ENCODE measurements at regions of chr6 and their contacts with region 1.

Region 1: DNA sequence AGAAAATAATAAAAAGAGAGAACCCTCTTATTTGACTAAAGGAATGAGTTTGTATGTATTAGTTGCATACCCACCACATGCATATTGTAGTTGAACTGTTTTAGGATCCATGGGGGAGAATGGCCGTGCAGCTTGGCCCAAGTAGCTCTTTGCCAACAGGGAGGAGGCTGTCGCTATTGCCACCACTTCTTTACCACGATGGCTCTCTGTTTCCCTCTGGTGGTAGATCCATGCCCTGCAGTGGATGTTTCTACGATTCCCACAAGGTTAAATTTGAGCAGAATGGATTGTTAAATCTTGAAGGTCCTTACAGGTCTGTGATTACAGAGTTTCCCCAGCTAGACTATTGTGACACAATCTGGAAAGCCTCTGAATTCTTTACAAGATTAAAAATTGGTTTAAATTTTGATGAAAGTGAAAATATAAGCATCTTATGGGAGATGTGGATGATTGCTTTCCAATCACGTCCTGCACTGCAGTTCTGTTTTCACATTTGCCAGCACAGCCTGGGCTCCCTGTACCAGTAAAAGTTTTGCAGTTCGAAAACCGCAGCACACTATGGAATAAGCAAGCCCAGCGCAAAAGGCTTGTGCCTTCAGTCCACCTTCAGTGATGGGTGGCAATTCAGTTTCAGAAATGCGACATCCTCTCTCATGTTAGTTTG is 34.4 kb upstream of the FNDC1 start:
- DNase-seq: peak; percentile 51 to 77 (median 61)
- ATAC-seq: peak; percentile 57 to 71
- H3K4me3 ChIP-seq: no peak overlapping the region
- H3K27ac ChIP-seq: no peak overlapping the region
- H3K4me1 ChIP-seq: no peaks in the 10 kb centered on the region
- H3K27me3 ChIP-seq: no peaks in the 10 kb centered on the region

Region 2: DNA sequence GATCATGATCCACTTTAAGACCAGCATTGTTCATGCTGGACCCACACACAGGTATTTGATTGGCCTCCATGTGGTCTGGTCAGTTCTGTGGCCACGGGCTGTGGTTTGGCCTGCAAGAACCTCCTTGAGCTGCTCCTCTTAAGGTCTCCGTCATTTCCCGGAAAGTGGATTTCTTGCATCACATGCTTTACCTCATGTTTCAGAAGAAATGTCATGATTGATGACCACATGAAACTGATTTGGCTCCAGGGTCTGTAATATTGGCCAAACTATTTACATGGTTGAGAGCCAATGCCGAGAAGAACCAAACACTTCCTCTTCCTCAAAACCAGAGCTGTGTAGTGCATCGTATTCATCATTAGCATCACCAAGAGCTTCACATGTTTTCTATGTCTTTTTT is 121.6 kb before region 1 on chr6:
- intact Hi-C with region 1: loop called in 2 of 4 experiments (anchors 10 kb)
- DNase-seq: no peak
- ATAC-seq: no peak
- H3K4me3 ChIP-seq: no peak overlapping the region
- H3K27ac ChIP-seq: no peak overlapping the region
- H3K4me1 ChIP-seq: no peaks in the 10 kb centered on the region
- H3K27me3 ChIP-seq: no peaks in the 10 kb centered on the region

Region 3: GRCh38 chr6:159042003-159042825 is 92.6 kb before region 1 on chr6:
- intact Hi-C with region 1: loop called in 3 of 4 experiments (anchors 2 to 10 kb)
- DNase-seq: peak in 2 of 3 donors; percentile 36 to 59
- ATAC-seq: peak; percentile 77 to 82
- H3K4me3 ChIP-seq: peak overlapping the region; percentile 35
- H3K27ac ChIP-seq: no peak overlapping the region
- H3K4me1 ChIP-seq: no peaks in the 10 kb centered on the region
- H3K27me3 ChIP-seq: no peaks in the 10 kb centered on the region

Measured in right cardiac atrium (tissue), 5 donors.